ENCODE measurements at regions of chr12 and their contacts with region 1.

Region 1: DNA sequence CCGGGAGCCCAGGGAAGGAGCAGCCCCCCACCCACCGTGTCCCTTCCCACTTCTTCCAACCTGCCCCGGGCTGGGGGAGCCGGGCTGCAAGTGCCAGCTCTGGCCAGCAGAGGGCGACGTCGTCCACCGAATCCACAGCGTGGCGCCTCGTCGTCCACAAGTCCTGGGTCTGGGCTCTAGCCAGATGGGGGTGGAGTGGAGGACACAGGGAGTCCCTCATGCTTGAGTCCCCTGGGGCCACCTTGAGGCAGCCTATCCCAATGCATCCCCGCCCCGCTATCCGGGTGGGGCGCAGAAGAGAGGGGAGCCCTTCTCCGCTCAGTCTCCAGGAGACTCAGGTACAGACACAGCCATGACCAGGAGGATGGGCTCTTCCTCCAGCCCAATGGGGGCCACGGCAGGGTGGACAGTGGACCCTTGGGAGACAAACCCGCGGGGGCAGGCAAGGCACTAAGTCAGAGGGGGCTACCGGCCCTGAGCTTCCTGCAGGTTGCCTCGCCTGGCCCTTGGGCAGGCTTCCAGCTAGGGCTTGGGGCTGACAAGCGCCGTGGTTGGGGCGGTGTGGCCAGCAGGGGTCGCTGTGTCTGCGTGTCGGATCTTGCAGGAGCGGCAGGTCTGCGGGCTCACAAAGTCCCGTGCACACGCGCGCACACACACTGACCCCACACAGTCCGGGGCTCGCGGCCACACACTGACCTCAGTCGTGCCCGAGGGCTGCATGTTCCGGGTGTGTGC is 5.5 kb downstream of the AQP5 start:
- DNase-seq: peak; percentile 63 to 99
- H3K4me3 ChIP-seq: peak overlapping the region in 3 of 4 experiments; percentile 31 to 53 (median 45); a peak in 6 of 8 replicates
- H3K27ac ChIP-seq: no peak overlapping the region
- H3K4me1 ChIP-seq: peaks cover 0 to 9% (median 3%) of the 10 kb centered on the region in 4 experiments; a peak in 5 of 7 replicates
- H3K27me3 ChIP-seq: peaks cover 0 to 40% (median 21%) of the 10 kb centered on the region in 4 experiments; a peak in 6 of 7 replicates
- CTCF ChIP-seq: peak in 2 of 3 experiments; percentile 96; a peak in 3 of 4 replicates
- EP300 ChIP-seq: no peak
- POLR2A ChIP-seq: no peak
- RAD21 ChIP-seq: peak; percentile 90 to 94

Region 2: GRCh38 chr12:49655595-49656236 is 311.5 kb before region 1 on chr12:
- CTCF ChIA-PET with region 1: no interaction called
- POLR2A ChIA-PET with region 1: no interaction called
- DNase-seq: no peak
- H3K4me3 ChIP-seq: no peak overlapping the region
- H3K27ac ChIP-seq: no peak overlapping the region
- H3K4me1 ChIP-seq: no peaks in the 10 kb centered on the region
- H3K27me3 ChIP-seq: no peaks in the 10 kb centered on the region
- CTCF ChIP-seq: no peak
- EP300 ChIP-seq: no peak
- POLR2A ChIP-seq: no peak
- RAD21 ChIP-seq: no peak

Region 3: GRCh38 chr12:49842519-49843352 is 124.5 kb before region 1 on chr12 and contains the start of gene BCDIN3D:
- CTCF ChIA-PET with region 1: interaction called, 19 read pairs
- POLR2A ChIA-PET with region 1: no interaction called
- DNase-seq: peak in 1 of 2 experiments; percentile 83
- H3K4me3 ChIP-seq: peak within 1 kb of the TSS; percentile 63 to 90 (median 84)
- H3K27ac ChIP-seq: peak within 1 kb of the TSS; percentile 62
- H3K4me1 ChIP-seq: peaks cover 2 to 5% (median 4%) of the 10 kb centered on the region in 4 experiments; a peak in 4 of 7 replicates
- H3K27me3 ChIP-seq: no peaks in the 10 kb centered on the region
- CTCF ChIP-seq: no peak
- EP300 ChIP-seq: no peak
- POLR2A ChIP-seq: peak in 1 of 2 experiments; percentile 80; a peak in 2 of 3 replicates
- RAD21 ChIP-seq: no peak
- total RNA-seq, gene BCDIN3D: 2.4 and 2.5 TPM in 2 replicates

Region 4: DNA sequence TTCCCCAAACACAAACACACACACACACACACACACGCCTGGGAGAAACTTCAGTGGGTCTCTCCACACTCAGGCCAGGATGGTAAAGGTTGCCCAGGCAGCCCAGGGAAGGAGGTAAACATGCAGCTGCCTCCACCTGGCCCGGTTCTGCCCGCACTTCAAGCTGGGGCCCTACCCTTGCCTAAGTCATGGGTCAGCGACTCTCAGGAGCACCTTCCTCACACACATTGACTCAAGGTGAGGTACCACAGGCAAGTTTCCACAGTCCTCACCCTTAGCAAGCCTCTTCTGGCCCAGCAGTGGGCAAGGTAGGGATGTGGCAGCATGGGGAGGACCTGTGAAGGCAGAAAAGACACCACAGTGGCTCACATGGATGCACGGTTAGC is 49.4 kb before region 1 on chr12:
- CTCF ChIA-PET with region 1: interaction called, 13 read pairs
- POLR2A ChIA-PET with region 1: no interaction called
- DNase-seq: no peak
- H3K4me3 ChIP-seq: no peak overlapping the region
- H3K27ac ChIP-seq: no peak overlapping the region
- H3K4me1 ChIP-seq: peaks cover 0 to 3% (median 3%) of the 10 kb centered on the region in 4 experiments; a peak in 2 of 7 replicates
- H3K27me3 ChIP-seq: no peaks in the 10 kb centered on the region; a peak in 1 of 7 replicates
- CTCF ChIP-seq: no peak
- EP300 ChIP-seq: no peak
- POLR2A ChIP-seq: no peak
- RAD21 ChIP-seq: no peak

Region 5: GRCh38 chr12:49990273-49990672 is 23.1 kb after region 1 on chr12:
- CTCF ChIA-PET with region 1: interaction called, 295 read pairs
- POLR2A ChIA-PET with region 1: interaction called, 4 read pairs
- DNase-seq: no peak
- H3K4me3 ChIP-seq: no peak overlapping the region
- H3K27ac ChIP-seq: no peak overlapping the region
- H3K4me1 ChIP-seq: peaks cover 0 to 6% (median 2%) of the 10 kb centered on the region in 4 experiments; a peak in 3 of 7 replicates
- H3K27me3 ChIP-seq: no peaks in the 10 kb centered on the region
- CTCF ChIP-seq: no peak
- EP300 ChIP-seq: no peak
- POLR2A ChIP-seq: no peak
- RAD21 ChIP-seq: no peak

Region 6: DNA sequence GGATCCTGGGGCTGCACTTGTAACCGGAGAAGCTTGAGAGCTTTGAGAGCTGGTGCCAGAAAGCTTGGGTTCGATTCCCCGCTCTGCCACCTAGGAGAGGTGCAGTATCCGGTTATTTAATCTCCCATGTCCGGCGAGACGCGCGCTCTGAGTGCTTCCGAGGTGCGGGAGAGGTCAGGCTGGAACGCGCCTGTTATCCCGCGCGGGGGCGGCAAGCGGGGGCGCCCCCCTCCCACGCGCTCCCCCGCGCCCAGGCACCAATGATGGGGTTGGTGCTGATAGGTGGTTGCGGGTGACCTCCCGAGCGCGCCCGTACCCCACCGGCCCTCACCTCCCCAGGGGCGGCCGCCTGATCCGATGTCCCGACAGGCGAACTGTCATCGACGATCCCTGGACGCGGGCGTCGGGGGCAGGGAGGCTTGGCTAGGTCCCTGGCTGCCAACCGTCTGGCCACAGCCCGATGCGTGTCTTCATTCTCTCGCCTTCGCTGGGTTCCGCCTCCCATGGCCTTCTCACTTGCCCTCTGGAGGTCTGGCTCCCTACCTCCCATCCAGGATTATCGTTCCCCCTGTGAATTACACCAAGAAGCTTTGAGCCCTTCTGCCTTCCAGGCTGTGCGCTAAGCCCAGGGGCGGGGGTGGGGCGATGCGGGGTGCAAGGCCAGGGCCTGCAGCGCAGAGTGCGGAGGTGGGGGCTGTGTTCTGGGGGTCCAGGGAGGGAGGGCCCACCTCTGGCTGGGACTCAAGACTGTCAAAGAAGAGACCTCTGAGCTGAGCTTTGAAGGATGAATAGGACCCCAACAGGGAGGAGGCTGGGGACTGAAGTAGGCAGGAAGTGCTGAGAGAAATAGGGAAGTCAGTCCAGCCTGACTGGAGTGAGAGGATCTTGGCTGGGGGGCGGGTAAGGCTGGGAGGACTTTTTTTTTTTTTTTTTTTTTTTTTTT is 65.7 kb after region 1 on chr12:
- CTCF ChIA-PET with region 1: interaction called, 138 read pairs
- POLR2A ChIA-PET with region 1: interaction called, 3 read pairs
- DNase-seq: peak in 1 of 2 experiments; percentile 71
- H3K4me3 ChIP-seq: peak overlapping the region; percentile 32 to 67 (median 65)
- H3K27ac ChIP-seq: no peak overlapping the region
- H3K4me1 ChIP-seq: peaks cover 0 to 3% (median under 1%) of the 10 kb centered on the region in 4 experiments; a peak in 1 of 7 replicates
- H3K27me3 ChIP-seq: peaks cover 0 to 2% (median 0%) of the 10 kb centered on the region in 4 experiments; a peak in 3 of 7 replicates
- CTCF ChIP-seq: no peak
- EP300 ChIP-seq: no peak
- POLR2A ChIP-seq: no peak
- RAD21 ChIP-seq: no peak

Region 7: DNA sequence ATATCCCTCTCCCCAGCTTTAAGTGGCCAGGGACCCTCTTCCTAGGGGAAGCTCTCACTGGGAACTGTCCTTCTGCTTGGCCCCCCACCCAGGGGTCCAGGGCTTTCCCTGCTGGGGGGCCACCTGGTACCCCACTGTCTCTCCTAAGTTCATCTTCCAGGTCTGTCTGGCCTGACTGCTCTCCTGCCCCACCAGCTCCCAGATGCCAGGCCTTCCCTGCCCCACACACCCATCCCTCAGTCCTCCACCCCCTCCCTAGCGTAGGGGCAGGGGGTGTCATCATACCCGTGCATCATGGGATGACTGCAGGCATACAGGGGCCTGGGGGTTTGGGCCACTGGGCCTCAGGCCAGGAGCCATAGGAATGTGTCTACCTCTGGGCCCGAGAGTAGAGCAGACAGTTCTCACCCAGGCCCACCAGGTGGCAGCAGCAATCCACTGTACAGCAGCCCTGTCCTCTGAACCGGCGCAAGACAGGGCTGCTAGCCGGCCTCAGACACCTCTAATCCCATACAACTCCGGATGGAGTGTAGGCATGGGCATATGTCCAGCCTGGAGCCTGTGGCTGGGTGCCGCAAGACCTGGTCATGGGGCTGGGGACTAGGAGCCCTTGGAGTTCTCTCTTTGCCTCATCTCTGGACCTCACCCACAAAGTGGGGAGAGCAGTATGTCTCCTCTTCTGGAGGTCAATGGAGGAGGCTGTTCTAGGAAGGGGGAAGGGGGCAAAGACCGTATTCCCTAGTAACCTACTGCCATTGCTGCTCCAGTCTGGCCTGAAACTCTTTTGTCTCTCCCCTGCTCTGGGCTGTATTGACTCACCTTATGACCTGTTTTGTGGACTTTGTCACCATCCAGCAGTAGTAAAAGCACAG is 108.0 kb after region 1 on chr12:
- CTCF ChIA-PET with region 1: interaction called, 420 read pairs
- POLR2A ChIA-PET with region 1: no interaction called
- DNase-seq: peak in 1 of 2 experiments; percentile 93
- H3K4me3 ChIP-seq: no peak overlapping the region
- H3K27ac ChIP-seq: no peak overlapping the region
- H3K4me1 ChIP-seq: peaks cover 0 to 6% (median 3%) of the 10 kb centered on the region in 4 experiments; a peak in 5 of 7 replicates
- H3K27me3 ChIP-seq: peaks cover 0 to 4% (median under 1%) of the 10 kb centered on the region in 4 experiments; a peak in 2 of 7 replicates
- CTCF ChIP-seq: peak; percentile 92 to 94 (median 94)
- EP300 ChIP-seq: no peak
- POLR2A ChIP-seq: no peak
- RAD21 ChIP-seq: peak; percentile 96 to 97

Region 8: DNA sequence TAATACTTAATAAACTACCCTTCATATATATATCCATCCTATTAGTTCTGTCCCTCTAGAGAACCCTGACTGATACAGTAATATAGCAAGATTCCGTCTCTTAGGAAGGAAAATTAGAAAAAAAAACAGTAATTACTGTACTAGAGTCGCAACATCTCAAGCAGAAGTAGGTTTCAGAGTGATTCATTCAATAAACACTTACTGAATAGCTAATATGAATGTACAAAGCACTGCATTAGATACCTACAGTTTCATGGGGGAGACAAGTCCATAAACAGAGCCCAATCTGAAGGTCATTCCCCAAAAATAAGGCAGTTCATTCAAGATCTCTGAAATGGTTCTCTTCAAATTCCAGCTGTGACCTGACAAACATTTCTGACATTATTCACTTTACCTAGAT is 190.1 kb after region 1 on chr12:
- CTCF ChIA-PET with region 1: no interaction called
- POLR2A ChIA-PET with region 1: no interaction called
- DNase-seq: no peak
- H3K4me3 ChIP-seq: no peak overlapping the region
- H3K27ac ChIP-seq: no peak overlapping the region
- H3K4me1 ChIP-seq: no peaks in the 10 kb centered on the region
- H3K27me3 ChIP-seq: no peaks in the 10 kb centered on the region
- CTCF ChIP-seq: no peak
- EP300 ChIP-seq: no peak
- POLR2A ChIP-seq: no peak
- RAD21 ChIP-seq: no peak

Measured in H1 (cell line).